Activated CD4-positive, alpha-beta memory T cell treated with anti-CD3 and anti-CD28 coated beads, Interleukin-2, amount 10 ng/mL, durations not matched to agents 7 days and 5 days (primary cell): ENCODE measurements at regions of chr21 and their contacts with region 1.

Region 1: GRCh38 chr21:25385911-25386474 is 221.3 kb downstream of the MRPL39 start:
- DNase-seq: no peak
- H3K4me3 Mint-ChIP-seq: no peak overlapping the region
- H3K27ac Mint-ChIP-seq: no peak overlapping the region
- H3K4me1 Mint-ChIP-seq: peaks cover 3% of the 10 kb centered on the region
- H3K27me3 Mint-ChIP-seq: no peaks in the 10 kb centered on the region

Region 2: DNA sequence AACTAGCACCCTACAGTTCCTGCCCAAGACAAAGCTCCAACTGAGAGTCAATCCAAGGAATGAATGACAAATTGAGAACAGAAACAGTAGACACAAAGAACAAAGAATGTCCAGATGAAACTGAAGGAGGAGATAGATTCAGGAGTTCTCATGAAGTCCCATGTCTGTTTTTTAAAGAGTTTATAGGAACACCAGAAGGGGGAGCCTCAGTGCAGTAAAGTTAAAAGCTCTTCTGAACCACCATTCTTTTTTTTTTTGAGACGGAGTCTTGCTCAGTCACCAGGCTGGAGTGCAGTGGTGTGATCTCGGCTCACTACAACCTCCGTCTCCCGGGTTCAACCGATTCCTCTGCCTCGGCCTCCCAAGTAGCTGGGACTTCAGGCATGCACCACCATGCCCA is 102.3 kb before region 1 on chr21:
- CTCF ChIA-PET with region 1: interaction called, 18 read pairs
- POLR2A ChIA-PET with region 1: interaction called, 3 read pairs
- DNase-seq: no peak
- H3K4me3 Mint-ChIP-seq: no peak overlapping the region
- H3K27ac Mint-ChIP-seq: no peak overlapping the region
- H3K4me1 Mint-ChIP-seq: no peaks in the 10 kb centered on the region
- H3K27me3 Mint-ChIP-seq: peaks cover 7% of the 10 kb centered on the region

Region 3: DNA sequence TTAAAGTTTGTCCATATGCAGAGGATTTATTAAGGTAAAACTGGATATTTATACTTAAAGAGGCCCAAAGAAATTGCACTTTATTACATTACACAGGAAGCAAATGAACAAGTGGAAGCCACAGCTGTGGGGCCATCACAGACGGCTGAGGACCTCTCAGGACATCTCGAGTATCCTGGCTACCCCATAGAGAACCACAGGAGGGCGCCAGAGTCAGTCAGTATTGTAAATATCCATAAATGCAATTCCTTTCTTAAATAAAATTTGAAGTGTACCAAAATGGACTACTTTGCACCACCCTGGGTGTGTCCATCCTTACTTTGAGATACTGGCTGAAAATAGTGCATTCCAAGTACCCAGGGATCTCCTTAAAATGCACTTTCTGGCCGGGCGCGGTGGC is 35.9 kb before region 1 on chr21:
- CTCF ChIA-PET with region 1: interaction called, 17 read pairs
- POLR2A ChIA-PET with region 1: no interaction called
- DNase-seq: peak; percentile 36
- H3K4me3 Mint-ChIP-seq: no peak overlapping the region
- H3K27ac Mint-ChIP-seq: no peak overlapping the region
- H3K4me1 Mint-ChIP-seq: no peaks in the 10 kb centered on the region
- H3K27me3 Mint-ChIP-seq: peaks cover 14% of the 10 kb centered on the region